CD8-positive, alpha-beta memory T cell (primary cell): ENCODE measurements at regions of chr2 and their contacts with region 1.

Region 1: DNA sequence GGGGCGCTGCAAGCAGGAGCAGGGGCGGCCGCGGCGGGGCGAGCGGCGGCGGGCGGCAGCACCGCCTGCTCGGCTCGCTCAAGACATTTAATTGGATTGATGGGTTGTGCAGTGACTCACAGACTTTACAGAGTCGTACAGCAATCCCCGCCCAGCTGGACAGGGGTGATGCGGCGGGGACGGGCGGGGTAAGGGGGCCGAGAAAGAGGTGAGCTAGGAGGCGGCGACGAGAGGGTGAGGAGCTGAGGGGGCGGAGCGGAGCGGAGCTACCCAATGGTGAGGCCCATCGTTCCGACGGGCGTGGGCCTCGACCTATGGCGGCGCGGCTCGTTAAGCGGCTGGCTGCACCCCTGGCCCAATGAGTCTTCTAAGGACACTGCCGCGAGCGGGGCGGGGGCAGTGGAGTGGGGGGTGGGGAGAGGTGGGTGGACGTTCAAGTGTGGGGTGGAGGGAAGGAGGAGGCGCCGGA is 97.1 kb upstream of the SERTAD2 start:
- DNase-seq: peak in 3 of 5 donors; percentile 96 to 99 (median 98)
- H3K4me3 ChIP-seq: peak overlapping the region; percentile 96
- H3K4me3 Mint-ChIP-seq: peak overlapping the region; percentile 90 to 100 (median 99)
- H3K27ac ChIP-seq: peak overlapping the region; percentile 90
- H3K27ac Mint-ChIP-seq: peak overlapping the region; percentile 93 to 99 (median 98)
- H3K4me1 ChIP-seq: peaks cover 17% of the 10 kb centered on the region
- H3K4me1 Mint-ChIP-seq: peaks cover 22 to 35% (median 27%) of the 10 kb centered on the region in 3 donors
- H3K27me3 ChIP-seq: no peaks in the 10 kb centered on the region
- H3K27me3 Mint-ChIP-seq: peaks cover 0 to 2% of the 10 kb centered on the region in 2 donors

Region 2: GRCh38 chr2:64730551-64731262 is 20.1 kb before region 1 on chr2:
- CTCF ChIA-PET with region 1: interaction called, 10 read pairs
- POLR2A ChIA-PET with region 1: interaction called, 25 read pairs
- DNase-seq: peak; percentile 6 to 63 (median 38)
- H3K4me3 ChIP-seq: peak overlapping the region; percentile 70
- H3K4me3 Mint-ChIP-seq: peak overlapping the region; percentile 85 to 94 (median 88)
- H3K27ac ChIP-seq: peak overlapping the region; percentile 60
- H3K27ac Mint-ChIP-seq: peak overlapping the region; percentile 87 to 99 (median 96)
- H3K4me1 ChIP-seq: peaks cover 44% of the 10 kb centered on the region
- H3K4me1 Mint-ChIP-seq: peaks cover 39 to 58% (median 48%) of the 10 kb centered on the region in 3 donors
- H3K27me3 ChIP-seq: no peaks in the 10 kb centered on the region
- H3K27me3 Mint-ChIP-seq: no peaks in the 10 kb centered on the region

Region 3: DNA sequence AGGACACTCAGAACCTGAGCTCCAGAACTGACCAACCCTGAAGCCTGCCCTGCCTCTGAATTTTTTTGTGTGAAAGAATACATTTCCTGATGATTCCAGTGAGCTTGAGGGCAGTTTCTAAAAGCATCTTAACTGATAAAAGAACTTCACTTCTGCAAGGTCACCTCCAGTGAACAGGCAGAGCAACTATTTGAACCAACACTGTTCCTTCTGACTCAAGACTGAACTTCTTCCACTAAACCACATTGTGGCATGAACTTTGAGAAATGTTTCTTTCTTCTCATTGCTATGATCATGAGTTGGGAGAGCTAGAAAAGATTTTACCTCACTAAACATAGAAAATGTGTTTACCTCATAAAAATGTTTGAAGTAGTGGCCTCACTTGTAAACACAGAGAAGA is 13.3 kb before region 1 on chr2:
- CTCF ChIA-PET with region 1: interaction called, 10 read pairs
- POLR2A ChIA-PET with region 1: interaction called, 14 read pairs
- DNase-seq: no peak
- H3K4me3 ChIP-seq: no peak overlapping the region
- H3K4me3 Mint-ChIP-seq: no peak overlapping the region
- H3K27ac ChIP-seq: no peak overlapping the region
- H3K27ac Mint-ChIP-seq: no peak overlapping the region
- H3K4me1 ChIP-seq: no peaks in the 10 kb centered on the region
- H3K4me1 Mint-ChIP-seq: peaks cover 0 to 15% (median 2%) of the 10 kb centered on the region in 3 donors
- H3K27me3 ChIP-seq: no peaks in the 10 kb centered on the region
- H3K27me3 Mint-ChIP-seq: no peaks in the 10 kb centered on the region

Region 4: GRCh38 chr2:64767670-64768468 is 17.0 kb after region 1 on chr2:
- CTCF ChIA-PET with region 1: interaction called, 15 read pairs
- POLR2A ChIA-PET with region 1: interaction called, 51 read pairs
- DNase-seq: peak; percentile 57 to 87 (median 68)
- H3K4me3 ChIP-seq: peak overlapping the region; percentile 74
- H3K4me3 Mint-ChIP-seq: peak overlapping the region; percentile 87 to 95 (median 90)
- H3K27ac ChIP-seq: peak overlapping the region; percentile 71
- H3K27ac Mint-ChIP-seq: peak overlapping the region; percentile 58 to 97 (median 92)
- H3K4me1 ChIP-seq: peaks cover 10% of the 10 kb centered on the region
- H3K4me1 Mint-ChIP-seq: peaks cover 16 to 22% (median 21%) of the 10 kb centered on the region in 3 donors
- H3K27me3 ChIP-seq: no peaks in the 10 kb centered on the region
- H3K27me3 Mint-ChIP-seq: no peaks in the 10 kb centered on the region

Region 5: GRCh38 chr2:64819774-64820696 is 69.2 kb after region 1 on chr2:
- CTCF ChIA-PET with region 1: interaction called, 5 read pairs
- POLR2A ChIA-PET with region 1: interaction called, 10 read pairs
- DNase-seq: peak in 4 of 5 donors; percentile 4 to 70 (median 62)
- H3K4me3 ChIP-seq: peak overlapping the region; percentile 42
- H3K4me3 Mint-ChIP-seq: peak overlapping the region; percentile 51 to 76 (median 71)
- H3K27ac ChIP-seq: peak overlapping the region; percentile 51
- H3K27ac Mint-ChIP-seq: peak overlapping the region; percentile 79 to 97 (median 92)
- H3K4me1 ChIP-seq: peaks cover 25% of the 10 kb centered on the region
- H3K4me1 Mint-ChIP-seq: peaks cover 20 to 31% (median 23%) of the 10 kb centered on the region in 3 donors
- H3K27me3 ChIP-seq: no peaks in the 10 kb centered on the region
- H3K27me3 Mint-ChIP-seq: no peaks in the 10 kb centered on the region

Region 6: GRCh38 chr2:64831134-64831976 is 80.5 kb after region 1 on chr2:
- CTCF ChIA-PET with region 1: interaction called, 6 read pairs
- POLR2A ChIA-PET with region 1: interaction called, 11 read pairs
- DNase-seq: peak; percentile 71 to 87 (median 74)
- H3K4me3 ChIP-seq: peak overlapping the region; percentile 33
- H3K4me3 Mint-ChIP-seq: peak overlapping the region; percentile 32 to 86 (median 67)
- H3K27ac ChIP-seq: no peak overlapping the region
- H3K27ac Mint-ChIP-seq: peak overlapping the region in 7 of 8 donors; percentile 6 to 97 (median 61)
- H3K4me1 ChIP-seq: peaks cover 10% of the 10 kb centered on the region
- H3K4me1 Mint-ChIP-seq: peaks cover 11 to 12% (median 11%) of the 10 kb centered on the region in 3 donors
- H3K27me3 ChIP-seq: no peaks in the 10 kb centered on the region
- H3K27me3 Mint-ChIP-seq: peaks cover 1 to 4% of the 10 kb centered on the region in 2 donors